ENCODE measurements at regions of chrX and their contacts with region 1.

Region 1: DNA sequence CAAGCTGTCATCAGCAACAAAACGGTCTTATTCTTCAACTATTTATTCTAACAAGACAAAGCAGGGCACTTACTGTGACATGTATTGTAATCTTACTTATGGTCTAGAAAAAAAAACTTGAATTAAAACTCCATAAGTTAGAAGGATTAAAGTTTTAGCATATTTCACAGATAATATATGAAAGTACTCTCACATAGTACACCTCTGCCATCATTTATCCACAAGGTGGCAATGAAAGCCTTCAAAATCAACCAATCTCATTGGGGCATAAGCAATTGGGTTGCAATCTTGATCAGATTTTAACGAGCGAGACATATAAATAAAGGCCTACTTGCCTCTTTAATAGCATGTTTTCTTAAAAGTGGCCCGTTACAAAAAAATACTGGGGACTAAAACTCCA is 1382.9 kb downstream of the FAM133A start:
- DNase-seq: no peak
- H3K4me3 ChIP-seq: no peak overlapping the region
- CTCF ChIP-seq: no peak

Region 2: DNA sequence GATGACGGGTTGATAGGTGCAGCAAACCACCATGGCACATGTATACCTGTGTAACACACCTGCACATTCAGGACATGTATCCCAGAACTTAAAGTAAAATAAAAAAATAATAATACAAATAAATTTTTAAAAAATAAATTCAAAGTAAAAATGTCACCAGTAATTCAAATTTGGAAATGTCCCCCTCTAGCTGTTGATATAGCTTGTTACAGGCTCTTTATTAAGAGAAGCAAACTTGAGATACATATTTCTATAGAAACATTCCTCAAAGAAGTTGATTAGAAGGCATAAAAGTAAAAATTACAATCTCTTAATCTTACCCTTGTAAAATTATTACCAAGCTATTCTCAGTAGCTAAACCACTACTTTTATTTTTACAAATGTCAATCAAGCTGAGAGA is 14.2 kb after region 1 on chrX:
- CTCF ChIA-PET with region 1: interaction called, 31 read pairs
- POLR2A ChIA-PET with region 1: no interaction called
- DNase-seq: no peak
- H3K4me3 ChIP-seq: no peak overlapping the region
- CTCF ChIP-seq: no peak

Region 3: GRCh38 chrX:95076449-95076848 is 19.5 kb after region 1 on chrX:
- CTCF ChIA-PET with region 1: interaction called, 31 read pairs
- POLR2A ChIA-PET with region 1: no interaction called
- DNase-seq: no peak
- H3K4me3 ChIP-seq: no peak overlapping the region
- CTCF ChIP-seq: peak; percentile 37

Region 4: DNA sequence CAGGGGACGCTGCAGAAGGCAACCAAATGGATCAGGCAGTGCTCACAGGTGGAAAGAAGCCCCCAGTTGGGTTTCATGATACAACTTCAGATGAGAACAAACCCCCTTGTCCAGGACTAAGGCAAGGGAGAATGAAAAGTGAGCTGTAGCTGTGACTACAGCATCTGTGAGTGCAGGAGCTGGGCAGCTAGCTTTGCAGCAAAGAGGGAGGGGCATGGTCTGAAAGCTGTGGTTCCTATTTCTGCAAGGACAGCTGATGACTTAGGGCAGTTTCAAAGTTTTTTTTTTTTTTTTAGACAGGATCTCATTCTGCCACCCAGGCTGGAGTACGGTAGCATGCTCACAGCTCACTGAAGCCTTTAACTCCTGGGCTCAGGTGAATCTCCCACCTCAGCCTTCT is 310.4 kb after region 1 on chrX:
- CTCF ChIA-PET with region 1: no interaction called
- POLR2A ChIA-PET with region 1: no interaction called
- DNase-seq: no peak
- H3K4me3 ChIP-seq: no peak overlapping the region
- CTCF ChIP-seq: no peak

Measured in AG04449 (cell line).